HepG2 (cell line): ENCODE measurements at regions of chr1 and their contacts with region 1.

Region 1: GRCh38 chr1:36285448-36286101 is 20.6 kb upstream of the SH3D21 start:
- DNase-seq: peak; percentile 86
- ATAC-seq: peak; percentile 84
- H3K4me3 ChIP-seq: no peak overlapping the region
- H3K27ac ChIP-seq: no peak overlapping the region
- H3K4me1 ChIP-seq: no peaks in the 10 kb centered on the region; the same call in 1 of the 2 replicates
- H3K27me3 ChIP-seq: no peaks in the 10 kb centered on the region
- CTCF ChIP-seq: peak; percentile 80
- EP300 ChIP-seq: no peak
- POLR2A ChIP-seq: no peak
- RAD21 ChIP-seq: peak; percentile 87

Region 2: GRCh38 chr1:36099681-36100341 is 185.8 kb before region 1 on chr1:
- CTCF ChIA-PET with region 1: interaction called, 3 read pairs
- POLR2A ChIA-PET with region 1: no interaction called
- in situ Hi-C with region 1: no loop called
- intact Hi-C with region 1: loop called (anchors 5 kb)
- DNase-seq: peak; percentile 73
- ATAC-seq: peak; percentile 86
- H3K4me3 ChIP-seq: peak overlapping the region in 2 of 3 experiments; percentile 42 to 60; a peak in 3 of 6 replicates
- H3K27ac ChIP-seq: no peak overlapping the region
- H3K4me1 ChIP-seq: peaks cover 29% of the 10 kb centered on the region; the same call in 1 of the 2 replicates
- H3K27me3 ChIP-seq: no peaks in the 10 kb centered on the region
- CTCF ChIP-seq: peak; percentile 86
- EP300 ChIP-seq: no peak
- POLR2A ChIP-seq: no peak
- RAD21 ChIP-seq: peak; percentile 93

Region 3: GRCh38 chr1:36149237-36149972 is 136.2 kb before region 1 on chr1 and contains the start of gene TRAPPC3:
- CTCF ChIA-PET with region 1: interaction called, 18 read pairs
- POLR2A ChIA-PET with region 1: interaction called, 4 read pairs
- in situ Hi-C with region 1: loop called (anchors 5 kb)
- intact Hi-C with region 1: loop called (anchors 1 kb)
- DNase-seq: peak; percentile 99
- ATAC-seq: peak; percentile 88
- H3K4me3 ChIP-seq: peak within 1 kb of the TSS; percentile 76 to 83 (median 81)
- H3K27ac ChIP-seq: peak within 1 kb of the TSS; percentile 80
- H3K4me1 ChIP-seq: peaks cover 58% of the 10 kb centered on the region
- H3K27me3 ChIP-seq: no peaks in the 10 kb centered on the region
- CTCF ChIP-seq: peak; percentile 98
- EP300 ChIP-seq: no peak
- POLR2A ChIP-seq: peak in 1 of 2 experiments; percentile 72; a peak in 2 of 4 replicates
- RAD21 ChIP-seq: peak; percentile 99
- total RNA-seq, gene TRAPPC3: 62.4 and 66.7 TPM in 2 replicates

Region 4: DNA sequence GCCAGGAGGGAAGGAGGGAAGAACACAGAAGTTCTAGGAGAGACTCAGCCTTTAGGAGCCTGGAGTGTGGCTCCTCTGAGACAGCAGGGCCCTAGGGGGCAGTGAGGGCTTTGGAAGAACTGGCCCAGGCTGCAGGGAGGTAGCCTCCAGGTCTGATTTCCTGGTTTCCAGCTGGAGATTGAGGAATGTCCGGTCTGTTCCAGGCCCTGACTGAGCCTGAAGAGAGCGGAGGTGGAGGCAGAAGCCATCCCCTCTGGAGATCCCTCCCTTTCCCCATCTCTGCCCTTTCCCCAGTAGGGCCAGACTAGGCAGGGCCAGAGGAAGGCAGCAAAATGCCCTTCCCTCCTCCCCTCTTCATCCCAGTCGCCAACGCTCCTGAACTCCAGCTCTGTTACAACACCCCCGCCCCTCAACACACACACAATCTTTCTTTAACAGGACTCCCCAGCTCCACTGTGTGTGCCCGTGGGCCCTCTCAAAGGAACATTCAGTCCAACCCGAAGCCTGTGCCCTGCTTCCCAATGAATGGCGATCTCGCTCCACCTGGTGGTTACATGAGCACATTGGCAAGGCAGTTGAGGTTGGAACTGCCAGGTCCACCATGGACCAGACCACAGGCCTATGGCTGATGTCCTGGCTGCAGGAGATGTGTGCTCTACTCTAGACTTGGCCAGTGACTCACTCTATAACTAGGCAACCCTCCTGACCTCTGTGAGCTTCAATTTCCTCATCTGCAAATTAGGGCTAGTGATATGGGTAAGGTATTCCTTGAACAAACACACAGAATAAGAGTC is 97.6 kb before region 1 on chr1:
- CTCF ChIA-PET with region 1: interaction called, 10 read pairs
- POLR2A ChIA-PET with region 1: interaction called, 5 read pairs
- in situ Hi-C with region 1: no loop called
- intact Hi-C with region 1: no loop called
- DNase-seq: peak; percentile 87
- ATAC-seq: peak; percentile 96
- H3K4me3 ChIP-seq: peak overlapping the region; percentile 22 to 72 (median 44); a peak in 5 of 6 replicates
- H3K27ac ChIP-seq: peak overlapping the region; percentile 41
- H3K4me1 ChIP-seq: peaks cover 10% of the 10 kb centered on the region; the same call in 1 of the 2 replicates
- H3K27me3 ChIP-seq: no peaks in the 10 kb centered on the region
- CTCF ChIP-seq: peak; percentile 98
- EP300 ChIP-seq: no peak
- POLR2A ChIP-seq: peak in 1 of 2 experiments; percentile 46; a peak in 2 of 4 replicates
- RAD21 ChIP-seq: peak; percentile 96

Region 5: DNA sequence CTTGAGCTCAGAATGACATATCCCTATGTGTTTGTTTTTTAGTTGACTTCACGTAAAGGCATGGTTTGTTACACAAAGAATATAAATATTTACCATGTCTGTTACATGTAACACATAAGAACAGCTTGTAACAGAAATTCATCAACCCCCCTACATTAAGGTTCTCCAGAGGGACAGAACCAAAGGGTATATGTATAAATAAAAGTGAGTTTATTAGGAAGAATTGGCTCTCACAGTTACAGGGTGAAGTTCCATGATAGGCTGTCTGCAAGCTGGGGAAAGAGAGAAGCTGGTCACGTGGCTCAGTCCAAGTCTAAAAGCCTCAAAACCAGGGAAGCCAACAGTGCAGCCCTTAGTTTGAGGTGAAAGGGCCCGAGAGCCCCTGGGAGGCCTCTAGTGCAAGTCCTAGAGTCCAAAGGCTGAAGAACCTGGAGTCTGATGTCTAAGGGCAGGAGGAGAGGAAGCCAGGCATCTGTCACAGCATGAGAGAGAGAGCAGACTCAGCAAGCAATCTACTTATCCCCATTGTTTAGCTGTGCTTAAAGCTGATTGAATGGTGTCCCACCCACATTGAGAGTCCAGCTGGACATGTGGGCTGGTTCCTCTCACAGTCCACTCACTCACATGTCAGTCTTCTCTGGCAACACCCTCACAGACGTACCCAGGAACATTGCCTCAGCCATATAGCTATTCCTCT is 45.5 kb before region 1 on chr1:
- CTCF ChIA-PET with region 1: no interaction called
- POLR2A ChIA-PET with region 1: interaction called, 4 read pairs
- in situ Hi-C with region 1: no loop called
- intact Hi-C with region 1: loop called (anchors 1 kb)
- DNase-seq: peak; percentile 93
- ATAC-seq: peak; percentile 96
- H3K4me3 ChIP-seq: peak overlapping the region in 2 of 3 experiments; percentile 26 to 29; a peak in 3 of 6 replicates
- H3K27ac ChIP-seq: peak overlapping the region; percentile 89
- H3K4me1 ChIP-seq: peaks cover 94% of the 10 kb centered on the region
- H3K27me3 ChIP-seq: no peaks in the 10 kb centered on the region
- CTCF ChIP-seq: no peak
- EP300 ChIP-seq: peak in 1 of 2 experiments; percentile 72; a peak in 2 of 4 replicates
- POLR2A ChIP-seq: peak; percentile 34 to 65; a peak in 2 of 4 replicates
- RAD21 ChIP-seq: peak; percentile 21; the same call in 1 of the 2 replicates

Region 6: DNA sequence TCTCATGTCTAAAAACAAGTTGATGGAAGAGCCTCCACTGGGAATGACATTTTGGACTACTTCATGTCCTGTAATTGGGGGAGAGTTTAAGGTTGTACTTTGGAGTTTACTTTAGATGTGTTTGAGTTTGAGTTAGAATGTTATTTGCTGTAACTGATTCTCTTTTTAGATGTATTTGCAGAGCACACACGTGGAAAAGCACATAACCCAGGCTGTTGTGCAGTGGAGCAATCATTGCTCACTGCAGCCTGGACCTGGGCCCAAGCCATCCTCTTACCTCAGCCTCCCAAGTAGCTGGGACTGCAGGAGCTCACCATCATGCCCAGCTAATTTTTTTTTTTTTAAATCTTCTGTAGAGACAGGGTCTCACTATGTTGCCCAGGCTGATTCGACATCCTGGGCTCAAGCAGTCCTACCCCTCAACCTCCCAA is 16.2 kb before region 1 on chr1:
- CTCF ChIA-PET with region 1: interaction called, 3 read pairs
- POLR2A ChIA-PET with region 1: interaction called, 4 read pairs
- in situ Hi-C with region 1: no loop called
- intact Hi-C with region 1: loop called (anchors 1 kb)
- DNase-seq: peak; percentile 94
- ATAC-seq: peak; percentile 99
- H3K4me3 ChIP-seq: peak overlapping the region in 2 of 3 experiments; percentile 28 to 32; a peak in 2 of 6 replicates
- H3K27ac ChIP-seq: peak overlapping the region; percentile 85
- H3K4me1 ChIP-seq: peaks cover 76% of the 10 kb centered on the region
- H3K27me3 ChIP-seq: no peaks in the 10 kb centered on the region
- CTCF ChIP-seq: no peak
- EP300 ChIP-seq: peak; percentile 88 to 93; a peak in 3 of 4 replicates
- POLR2A ChIP-seq: no peak
- RAD21 ChIP-seq: no peak

Region 7: GRCh38 chr1:36366091-36366661 is 80.6 kb after region 1 on chr1:
- CTCF ChIA-PET with region 1: no interaction called
- POLR2A ChIA-PET with region 1: no interaction called
- in situ Hi-C with region 1: no loop called
- intact Hi-C with region 1: no loop called
- DNase-seq: no peak
- ATAC-seq: no peak
- H3K4me3 ChIP-seq: no peak overlapping the region
- H3K27ac ChIP-seq: no peak overlapping the region
- H3K4me1 ChIP-seq: peaks cover 28% of the 10 kb centered on the region
- H3K27me3 ChIP-seq: no peaks in the 10 kb centered on the region
- CTCF ChIP-seq: no peak
- EP300 ChIP-seq: no peak
- POLR2A ChIP-seq: no peak
- RAD21 ChIP-seq: no peak

Region 8: GRCh38 chr1:36450270-36450918 is 164.8 kb after region 1 on chr1 and contains the start of gene OSCP1:
- CTCF ChIA-PET with region 1: no interaction called
- POLR2A ChIA-PET with region 1: no interaction called
- in situ Hi-C with region 1: no loop called
- intact Hi-C with region 1: no loop called
- DNase-seq: peak; percentile 79
- ATAC-seq: peak; percentile 95
- H3K4me3 ChIP-seq: peak within 1 kb of the TSS; percentile 42 to 68 (median 65); a peak in 5 of 6 replicates
- H3K27ac ChIP-seq: peak within 1 kb of the TSS; percentile 67
- H3K4me1 ChIP-seq: 0 out of 2 replicates have a peak, but pooled peaks cover 7% of the 10 kb centered on the region
- H3K27me3 ChIP-seq: no peaks in the 10 kb centered on the region
- CTCF ChIP-seq: no peak
- EP300 ChIP-seq: no peak
- POLR2A ChIP-seq: peak in 1 of 2 experiments; percentile 65; a peak in 2 of 4 replicates
- RAD21 ChIP-seq: no peak
- total RNA-seq, gene OSCP1: 0.60 and 0.86 TPM in 2 replicates